ENCODE measurements at regions of chr6 and their contacts with region 1.

Region 1: DNA sequence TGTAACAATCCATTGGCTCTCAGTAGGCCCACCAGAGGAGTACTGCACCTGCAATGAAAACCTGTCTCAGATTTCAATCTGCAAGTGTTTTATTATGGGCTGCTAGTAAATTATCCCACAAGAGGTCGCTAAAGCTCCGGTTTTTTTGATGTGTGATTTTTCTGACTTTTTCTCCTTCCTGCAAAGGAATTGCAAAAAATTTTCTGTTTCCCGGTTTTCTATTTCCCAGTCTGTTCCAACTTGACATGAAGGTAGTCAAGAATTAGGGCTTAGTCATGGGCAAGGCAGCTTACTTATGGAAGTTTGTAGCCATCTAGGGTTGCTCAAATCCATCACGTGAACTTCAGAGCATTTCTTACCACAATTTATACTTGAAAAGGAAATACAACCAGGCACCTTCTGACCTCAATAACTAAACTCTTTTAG is 38.5 kb upstream of the AHI1 start:
- DNase-seq: no peak
- ATAC-seq: no peak

Region 2: GRCh38 chr6:135819665-135820064 is 283.7 kb after region 1 on chr6:
- intact Hi-C with region 1: no loop called
- DNase-seq: no peak
- ATAC-seq: peak; percentile 45

Region 3: DNA sequence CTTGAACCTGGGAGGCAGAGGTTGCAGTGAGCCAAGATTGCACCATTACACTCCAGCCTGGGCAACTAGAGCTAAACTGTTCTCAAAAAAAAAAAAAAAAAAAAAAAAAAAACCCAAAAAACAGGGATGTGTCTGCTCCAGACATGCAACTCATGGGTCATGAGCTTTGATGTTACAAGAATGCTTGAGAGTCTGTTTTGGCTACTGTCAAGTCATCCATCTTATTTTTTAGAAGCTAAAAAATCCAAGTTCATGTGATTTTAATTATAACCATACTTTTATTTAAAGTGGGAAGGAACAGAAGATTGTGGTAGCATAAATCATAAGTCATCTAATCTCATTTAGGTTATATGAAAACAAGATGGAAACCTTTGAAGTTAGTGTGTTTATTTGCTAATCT is 436.1 kb after region 1 on chr6:
- intact Hi-C with region 1: no loop called
- DNase-seq: no peak
- ATAC-seq: no peak

Region 4: DNA sequence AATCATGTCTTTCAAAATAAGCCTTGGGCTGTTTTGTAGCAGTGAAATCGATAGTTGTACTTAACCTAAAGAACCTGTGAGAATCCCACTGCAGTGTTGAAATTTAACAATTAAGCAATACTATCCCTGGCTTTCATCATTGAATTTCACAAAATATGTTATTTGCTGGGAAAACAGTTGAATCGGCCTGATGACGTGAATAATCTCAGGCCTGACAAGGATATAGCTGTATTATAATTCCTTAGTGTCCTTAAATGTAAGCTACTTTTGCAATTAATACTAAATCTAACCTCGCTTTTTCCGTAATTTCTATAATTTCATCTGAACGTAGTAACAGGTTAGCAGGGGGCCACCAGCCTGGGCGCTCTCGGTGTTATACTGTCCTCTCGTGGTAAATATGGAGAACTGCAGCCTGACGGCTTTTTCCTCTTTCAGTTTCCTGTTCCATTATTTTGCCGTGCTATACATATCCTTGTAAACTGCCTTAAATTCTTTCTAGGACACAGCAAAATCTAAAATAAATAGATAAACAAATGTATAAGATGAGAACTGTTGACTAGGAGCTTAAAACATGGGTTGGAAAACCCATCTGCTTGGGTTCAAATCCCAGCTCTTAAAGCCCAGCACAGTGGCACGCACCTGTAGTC is 690.1 kb after region 1 on chr6:
- intact Hi-C with region 1: loop called (anchors 5 kb)
- DNase-seq: peak; percentile 65
- ATAC-seq: peak; percentile 94